Heart right ventricle (tissue), 16 donors: ENCODE measurements at regions of chr5 and their contacts with region 1.

Region 1: GRCh38 chr5:173283318-173284288 is 44.6 kb downstream of the STC2 start:
- DNase-seq: peak; percentile 73 to 84
- ATAC-seq: peak; percentile 85 to 91 (median 88)
- H3K4me3 ChIP-seq: peak overlapping the region in 8 of 10 donors; percentile 9 to 45 (median 34)
- H3K27ac ChIP-seq: peak overlapping the region in 7 of 10 donors; percentile 21 to 77 (median 42)
- H3K4me1 ChIP-seq: peaks cover 0 to 34% (median 7%) of the 10 kb centered on the region in 9 donors
- H3K27me3 ChIP-seq: peaks cover 0 to 73% (median 30%) of the 10 kb centered on the region in 7 donors
- CTCF ChIP-seq: peak; percentile 64 to 85 (median 76)

Region 2: DNA sequence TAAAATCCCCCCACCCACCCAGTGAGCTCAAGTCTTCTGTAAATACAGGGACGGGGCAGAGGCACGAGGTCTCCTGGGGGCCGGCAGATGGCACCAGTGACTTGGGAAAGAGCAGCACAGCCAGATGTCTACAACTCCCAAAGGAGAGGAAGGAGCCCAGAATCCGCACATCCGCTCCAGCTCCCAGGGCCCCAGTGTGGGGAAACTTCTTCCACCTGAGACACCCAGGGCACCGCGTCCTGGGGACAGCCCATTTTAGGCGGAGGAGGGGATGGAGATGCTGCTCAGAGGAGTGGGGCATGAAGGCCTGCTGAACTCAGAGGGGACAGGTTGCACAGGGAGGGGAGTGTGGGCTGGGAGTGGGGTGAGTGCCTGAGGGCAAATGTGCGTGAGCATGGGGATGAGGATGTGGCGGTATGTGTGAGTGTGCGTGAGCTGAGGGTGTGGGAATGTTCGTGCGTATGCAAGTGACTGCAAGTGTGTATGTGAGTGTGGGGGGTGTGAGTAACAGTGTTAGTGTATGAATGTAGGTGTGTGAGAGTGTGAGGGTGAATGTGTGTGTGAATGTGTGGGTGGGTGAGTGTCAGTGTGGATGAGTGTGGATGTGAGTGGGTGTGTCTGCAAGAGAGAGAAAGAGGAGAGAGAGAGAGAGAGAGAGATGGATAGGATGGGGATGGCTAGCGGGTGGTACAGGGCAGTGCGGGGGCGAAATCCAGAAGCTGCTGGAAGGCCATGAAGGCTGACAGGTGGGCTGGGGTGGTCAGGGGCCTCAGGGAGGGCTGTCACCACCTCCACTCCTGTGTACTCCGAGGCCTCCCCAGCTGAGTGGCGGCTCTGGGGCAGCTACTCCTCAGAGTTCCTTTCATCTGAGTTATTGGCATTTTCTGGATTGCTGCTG is 576.1 kb before region 1 on chr5:
- intact Hi-C with region 1: loop called in 5 of 10 experiments (anchors 5 to 10 kb)
- DNase-seq: no peak
- ATAC-seq: peak; percentile 43 to 82 (median 66)
- H3K4me3 ChIP-seq: no peak overlapping the region
- H3K27ac ChIP-seq: no peak overlapping the region
- H3K4me1 ChIP-seq: peaks cover 0 to 4% (median 0%) of the 10 kb centered on the region in 9 donors
- H3K27me3 ChIP-seq: peaks cover 0 to 18% (median 0%) of the 10 kb centered on the region in 7 donors
- CTCF ChIP-seq: peak; percentile 11 to 60 (median 48)

Region 3: DNA sequence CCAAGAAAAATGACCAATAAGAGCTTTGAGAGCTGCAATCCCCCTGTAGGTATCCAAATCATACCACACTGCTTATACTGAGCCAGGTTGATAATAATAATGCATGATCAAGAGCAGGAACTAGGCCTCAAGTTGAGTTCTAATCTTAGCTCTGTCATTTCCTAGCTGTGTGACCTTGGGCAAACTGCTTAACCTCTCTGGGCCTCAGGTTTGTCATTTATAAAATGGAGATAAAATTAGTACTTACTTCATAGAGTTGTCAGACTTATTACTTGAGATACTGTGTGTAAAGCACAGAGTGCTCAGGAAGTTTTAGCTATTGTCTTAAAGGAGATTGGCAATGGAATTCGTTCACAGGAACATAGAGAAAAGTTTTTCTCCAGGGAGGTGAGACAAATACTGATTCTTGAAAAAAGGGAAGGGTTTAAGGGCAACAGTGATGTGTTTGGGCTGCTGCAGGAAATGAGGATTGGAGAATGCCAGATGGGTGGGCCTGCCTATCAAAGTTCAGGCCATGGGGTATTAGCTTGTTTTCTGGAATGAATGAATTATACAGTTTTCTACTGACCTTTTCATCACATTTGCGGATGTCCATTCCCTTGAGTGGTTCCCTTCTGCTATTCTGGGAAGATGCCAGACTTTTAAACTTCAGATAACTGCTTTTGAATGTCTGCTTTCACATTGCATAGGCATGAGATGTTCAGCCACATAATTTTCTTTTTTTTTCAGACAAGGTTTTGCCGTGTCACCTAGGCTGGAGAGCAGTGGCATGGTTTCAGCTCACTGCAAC is 310.3 kb before region 1 on chr5:
- intact Hi-C with region 1: loop called in 3 of 10 experiments (anchors 5 to 10 kb)
- DNase-seq: no peak
- ATAC-seq: peak in 5 of 8 donors; percentile 26 to 77 (median 44)
- H3K4me3 ChIP-seq: no peak overlapping the region
- H3K27ac ChIP-seq: peak overlapping the region in 1 of 10 donors; percentile 31
- H3K4me1 ChIP-seq: peaks cover 0 to 27% (median 4%) of the 10 kb centered on the region in 9 donors
- H3K27me3 ChIP-seq: peaks cover 0 to 2% (median 0%) of the 10 kb centered on the region in 7 donors
- CTCF ChIP-seq: no peak

Region 4: DNA sequence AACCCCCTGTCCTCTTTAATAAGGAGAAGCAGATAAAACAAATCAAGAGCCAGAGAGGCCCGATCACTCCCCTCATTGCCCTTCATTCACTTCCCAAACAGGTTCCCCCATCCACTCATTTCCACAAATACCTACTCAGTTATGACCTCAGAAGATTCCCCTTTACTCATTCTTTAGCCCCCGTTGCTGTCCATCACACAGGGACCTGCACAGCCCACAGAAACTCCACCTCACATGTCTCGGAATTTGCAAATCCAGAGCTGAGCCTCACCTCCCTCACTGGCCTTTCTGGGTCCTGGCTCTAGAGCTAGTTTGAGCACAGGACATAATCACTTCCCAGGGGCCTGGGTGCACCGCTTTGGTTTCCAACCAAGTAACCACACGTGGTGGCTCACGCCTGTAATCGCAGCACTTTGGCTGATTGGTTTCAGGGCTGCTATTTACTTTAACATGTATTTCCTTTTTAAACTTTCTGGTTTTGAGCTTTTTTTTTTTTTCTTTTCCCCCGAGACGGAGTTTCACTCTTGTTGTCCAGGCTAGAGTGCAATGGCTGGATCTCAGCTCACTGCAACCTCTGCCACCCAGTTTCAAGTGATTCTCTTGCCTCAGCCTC is 282.3 kb before region 1 on chr5:
- intact Hi-C with region 1: loop called in 2 of 10 experiments (anchors 10 kb)
- DNase-seq: no peak
- ATAC-seq: peak in 1 of 8 donors; percentile 37
- H3K4me3 ChIP-seq: no peak overlapping the region
- H3K27ac ChIP-seq: no peak overlapping the region
- H3K4me1 ChIP-seq: peaks cover 14 to 68% (median 50%) of the 10 kb centered on the region in 9 donors
- H3K27me3 ChIP-seq: no peaks in the 10 kb centered on the region
- CTCF ChIP-seq: no peak

Region 5: DNA sequence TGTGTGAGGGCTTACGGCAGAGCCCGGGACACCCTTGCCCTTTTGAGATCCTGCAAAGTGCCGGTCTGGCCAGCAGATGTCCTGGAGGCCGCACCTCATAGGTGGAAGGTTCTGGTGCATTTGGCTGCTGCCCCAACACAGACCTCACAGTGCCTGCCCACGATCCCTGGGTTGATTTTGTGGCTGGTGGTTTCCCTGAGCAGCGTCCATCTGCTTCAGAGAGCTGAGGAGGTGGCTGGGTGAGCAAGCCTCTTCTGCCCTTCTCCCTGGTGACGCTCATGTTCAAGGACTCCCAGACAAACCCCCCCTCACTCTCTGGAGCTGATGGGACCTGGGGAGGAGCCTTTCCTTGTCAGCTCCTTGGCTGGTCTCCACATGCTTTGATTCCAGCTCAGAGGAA is 120.4 kb before region 1 on chr5:
- intact Hi-C with region 1: loop called (anchors 2 to 10 kb)
- DNase-seq: peak; percentile 8 to 34
- ATAC-seq: peak in 6 of 8 donors; percentile 28 to 69 (median 57)
- H3K4me3 ChIP-seq: no peak overlapping the region
- H3K27ac ChIP-seq: peak overlapping the region in 8 of 10 donors; percentile 20 to 84 (median 64)
- H3K4me1 ChIP-seq: peaks cover 0 to 46% (median 15%) of the 10 kb centered on the region in 9 donors
- H3K27me3 ChIP-seq: no peaks in the 10 kb centered on the region
- CTCF ChIP-seq: peak in 4 of 9 donors; percentile 6 to 29 (median 20)